Right lobe of liver (tissue), 6 donors: ENCODE measurements at regions of chr7 and their contacts with region 1.

Region 1: GRCh38 chr7:154931906-154932305 is 71.0 kb downstream of the PAXIP1 start:
- DNase-seq: no peak
- ATAC-seq: no peak
- H3K4me3 ChIP-seq: no peak overlapping the region
- H3K27ac ChIP-seq: no peak overlapping the region
- H3K4me1 ChIP-seq: peaks cover 0 to 7% (median 0%) of the 10 kb centered on the region in 4 donors
- H3K27me3 ChIP-seq: no peaks in the 10 kb centered on the region
- CTCF ChIP-seq: no peak
- POLR2A ChIP-seq: no peak

Region 2: DNA sequence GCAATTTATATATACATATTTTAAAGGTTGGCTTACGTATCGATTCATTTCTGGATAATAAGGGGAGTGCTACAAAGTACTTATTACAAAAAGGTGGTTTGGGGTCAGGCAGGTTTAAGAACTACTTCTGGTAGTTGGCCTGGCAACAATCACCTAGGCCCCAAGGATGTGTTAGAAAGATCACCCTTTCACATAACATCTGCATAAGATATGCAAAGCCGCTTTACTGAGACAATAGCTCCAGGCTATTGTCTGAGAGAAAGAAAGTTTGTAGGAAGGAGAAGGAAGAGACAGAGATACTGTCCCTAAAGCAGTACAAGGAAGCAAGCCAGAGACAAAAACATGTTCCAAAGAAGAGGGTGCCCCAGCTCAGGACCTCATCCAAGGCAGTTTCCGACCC is 64.8 kb after region 1 on chr7:
- intact Hi-C with region 1: loop called in 1 of 2 experiments (anchors 10 kb)
- DNase-seq: no peak
- ATAC-seq: no peak
- H3K4me3 ChIP-seq: no peak overlapping the region
- H3K27ac ChIP-seq: no peak overlapping the region
- H3K4me1 ChIP-seq: no peaks in the 10 kb centered on the region
- H3K27me3 ChIP-seq: no peaks in the 10 kb centered on the region
- CTCF ChIP-seq: no peak
- POLR2A ChIP-seq: no peak

Region 3: GRCh38 chr7:155163696-155164095 is 231.8 kb after region 1 on chr7:
- intact Hi-C with region 1: no loop called
- DNase-seq: no peak
- ATAC-seq: no peak
- H3K4me3 ChIP-seq: no peak overlapping the region
- H3K27ac ChIP-seq: no peak overlapping the region
- H3K4me1 ChIP-seq: no peaks in the 10 kb centered on the region
- H3K27me3 ChIP-seq: no peaks in the 10 kb centered on the region
- CTCF ChIP-seq: no peak
- POLR2A ChIP-seq: no peak